Heart right ventricle (tissue), 16 donors: ENCODE measurements at regions of chr16 and their contacts with region 1.

Region 1: DNA sequence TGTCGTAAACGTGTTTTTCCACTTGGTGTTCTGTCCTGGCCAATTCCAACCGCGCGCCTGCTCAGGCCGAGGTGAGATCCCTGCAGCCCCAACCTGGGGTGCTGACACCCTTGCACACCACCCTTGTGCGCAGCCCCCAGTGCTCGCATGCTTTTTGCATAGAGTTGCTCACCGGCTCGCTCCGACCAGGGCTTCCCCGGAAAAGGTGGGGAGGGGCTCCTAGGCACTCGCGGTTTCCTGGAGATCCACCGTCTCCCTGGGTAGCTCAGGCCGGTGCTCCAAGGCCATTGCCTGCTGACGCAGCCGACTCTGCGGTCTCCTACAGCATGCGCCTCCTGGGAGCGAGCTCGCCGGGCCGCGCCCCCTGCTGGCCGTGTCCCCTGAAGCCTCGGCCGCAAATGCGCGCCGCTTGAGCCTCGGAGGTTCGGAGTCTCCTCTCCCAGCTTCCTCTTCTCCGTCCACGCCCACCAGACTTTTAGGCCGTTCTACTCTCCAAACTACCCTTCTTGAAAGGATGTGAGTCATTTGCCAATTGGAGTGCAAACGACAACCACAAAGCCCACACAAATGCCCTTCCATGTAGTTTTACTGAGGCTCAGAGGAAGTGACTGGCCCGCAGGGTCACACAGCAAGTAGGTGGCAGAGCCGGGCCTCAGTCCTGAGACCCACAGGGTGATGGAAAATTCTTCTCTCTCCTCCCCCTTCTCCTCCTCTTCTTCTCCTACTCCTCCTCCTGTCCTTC is 7.2 kb upstream of the PDP2 start:
- DNase-seq: peak; percentile 89 to 92
- ATAC-seq: peak; percentile 92 to 97 (median 96)
- H3K4me3 ChIP-seq: peak overlapping the region in 9 of 10 donors; percentile 8 to 52 (median 43)
- H3K27ac ChIP-seq: peak overlapping the region in 6 of 10 donors; percentile 1 to 70 (median 32)
- H3K4me1 ChIP-seq: peaks cover 0 to 23% (median 9%) of the 10 kb centered on the region in 9 donors
- H3K27me3 ChIP-seq: peaks cover 0 to 5% (median 0%) of the 10 kb centered on the region in 7 donors
- CTCF ChIP-seq: peak; percentile 75 to 99 (median 96)

Region 2: DNA sequence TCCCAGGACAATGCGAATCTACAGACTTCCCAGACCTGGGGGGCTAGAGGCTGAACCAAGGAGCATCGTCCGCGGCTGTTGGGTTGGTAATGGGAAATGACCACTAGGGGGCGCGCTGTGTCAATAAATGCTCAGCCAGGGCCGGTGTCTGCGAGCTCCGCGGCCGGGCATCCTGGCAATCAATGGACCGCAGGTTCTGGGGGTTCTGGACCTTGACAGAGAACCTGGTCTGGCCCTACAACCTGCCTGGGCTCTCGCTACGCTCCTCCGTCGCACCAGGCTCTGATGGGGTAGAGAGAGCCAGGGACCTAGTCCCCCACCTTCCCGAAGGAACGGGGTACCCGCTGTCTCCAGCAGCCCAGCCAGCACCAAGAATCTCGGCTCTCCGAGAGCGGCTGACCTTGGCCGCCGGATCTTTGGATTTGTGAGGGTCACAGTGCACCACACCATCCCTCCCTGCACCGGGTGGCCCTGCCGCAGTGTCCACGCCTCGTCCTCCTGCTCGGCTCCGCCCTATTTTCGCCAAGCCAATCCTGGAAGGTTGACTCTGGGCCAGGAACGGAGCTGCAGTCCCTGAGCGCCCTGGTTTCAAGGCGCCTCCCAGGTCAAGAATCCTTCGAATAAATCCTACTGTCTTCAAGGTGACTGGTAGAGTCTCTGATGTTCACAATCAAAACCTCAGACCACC is 466.4 kb before region 1 on chr16:
- intact Hi-C with region 1: loop called in 1 of 10 experiments (anchors 5 kb)
- DNase-seq: peak; percentile 88 to 91
- ATAC-seq: peak; percentile 77 to 94 (median 88)
- H3K4me3 ChIP-seq: peak overlapping the region; percentile 37 to 81 (median 60)
- H3K27ac ChIP-seq: peak overlapping the region in 9 of 10 donors; percentile 28 to 81 (median 65)
- H3K4me1 ChIP-seq: peaks cover 6 to 38% (median 34%) of the 10 kb centered on the region in 9 donors
- H3K27me3 ChIP-seq: no peaks in the 10 kb centered on the region
- CTCF ChIP-seq: peak; percentile 85 to 96 (median 93)

Region 3: GRCh38 chr16:66660422-66661209 is 212.5 kb before region 1 on chr16:
- intact Hi-C with region 1: loop called in 1 of 10 experiments (anchors 5 kb)
- DNase-seq: peak; percentile 57 to 64
- ATAC-seq: peak; percentile 93 to 97 (median 96)
- H3K4me3 ChIP-seq: no peak overlapping the region
- H3K27ac ChIP-seq: peak overlapping the region; percentile 1 to 79 (median 54)
- H3K4me1 ChIP-seq: peaks cover 8 to 39% (median 29%) of the 10 kb centered on the region in 9 donors
- H3K27me3 ChIP-seq: no peaks in the 10 kb centered on the region
- CTCF ChIP-seq: peak in 5 of 9 donors; percentile 12 to 49 (median 41)

Region 4: DNA sequence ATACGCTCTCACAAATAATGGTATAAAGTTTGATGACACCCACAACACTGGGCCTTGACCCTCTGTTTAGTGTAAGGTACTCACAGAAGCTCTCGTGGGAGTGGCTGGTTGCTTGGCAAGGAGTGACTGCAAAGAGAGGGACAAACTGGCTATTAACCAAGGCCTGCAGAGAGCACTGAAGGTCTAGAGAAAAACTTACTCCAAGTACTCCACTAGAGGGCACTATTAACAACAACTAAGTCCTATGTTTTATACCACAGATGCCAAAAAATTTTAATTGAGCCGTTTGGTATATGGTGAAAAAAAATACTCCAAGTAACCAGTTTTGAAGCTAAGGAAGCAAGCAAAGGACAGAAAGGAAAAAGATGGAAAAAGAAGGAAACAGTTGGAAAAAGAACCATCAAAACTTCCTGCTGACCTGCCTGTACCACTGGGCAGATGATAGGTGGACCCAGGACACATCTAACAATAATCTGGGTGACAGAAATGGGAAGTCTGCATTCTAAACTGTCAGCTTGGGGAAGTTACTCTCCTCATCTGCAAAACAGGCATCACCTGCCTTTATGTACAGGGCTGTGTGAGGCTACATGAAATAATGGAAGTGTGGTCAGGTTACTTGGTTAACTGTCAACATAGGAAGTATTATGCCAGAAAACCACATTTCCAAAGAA is 144.9 kb before region 1 on chr16:
- intact Hi-C with region 1: loop called in 8 of 10 experiments (anchors 5 to 10 kb)
- DNase-seq: peak in 1 of 2 donors; percentile 48
- ATAC-seq: peak; percentile 73 to 92 (median 84)
- H3K4me3 ChIP-seq: no peak overlapping the region
- H3K27ac ChIP-seq: peak overlapping the region in 1 of 10 donors; percentile 36
- H3K4me1 ChIP-seq: peaks cover 0 to 20% (median 8%) of the 10 kb centered on the region in 9 donors
- H3K27me3 ChIP-seq: no peaks in the 10 kb centered on the region
- CTCF ChIP-seq: peak; percentile 53 to 79 (median 74)

Region 5: GRCh38 chr16:66830422-66831404 is 42.4 kb before region 1 on chr16 and contains the start of gene NAE1:
- intact Hi-C with region 1: loop called in 6 of 10 experiments (anchors 1 to 5 kb)
- DNase-seq: peak; percentile 80 to 92
- ATAC-seq: peak; percentile 97 to 99 (median 98)
- H3K4me3 ChIP-seq: peak within 1 kb of the TSS; percentile 77 to 96 (median 86)
- H3K27ac ChIP-seq: peak within 1 kb of the TSS; percentile 46 to 94 (median 90)
- H3K4me1 ChIP-seq: peaks cover 5 to 25% (median 14%) of the 10 kb centered on the region in 9 donors
- H3K27me3 ChIP-seq: no peaks in the 10 kb centered on the region
- CTCF ChIP-seq: peak; percentile 95 to 100 (median 99)
- total RNA-seq, gene NAE1: 29.6 to 35.9 (median 31.3) TPM

Region 6: GRCh38 chr16:66845791-66846221 is 27.3 kb before region 1 on chr16:
- intact Hi-C with region 1: no loop called
- DNase-seq: no peak
- ATAC-seq: peak in 2 of 8 donors; percentile 38 to 54
- H3K4me3 ChIP-seq: no peak overlapping the region
- H3K27ac ChIP-seq: no peak overlapping the region
- H3K4me1 ChIP-seq: peaks cover 4 to 23% (median 12%) of the 10 kb centered on the region in 9 donors
- H3K27me3 ChIP-seq: peaks cover 10 to 52% (median 39%) of the 10 kb centered on the region in 7 donors
- CTCF ChIP-seq: no peak